ENCODE measurements at regions of chr5 and their contacts with region 1.

Region 1: GRCh38 chr5:172188033-172188892 is at the start of gene STK10:
- DNase-seq: peak; percentile 71 to 93
- H3K4me3 ChIP-seq: peak within 1 kb of the TSS; percentile 67
- H3K27ac ChIP-seq: peak within 1 kb of the TSS; percentile 65
- H3K4me1 ChIP-seq: peaks cover 21% of the 10 kb centered on the region
- H3K27me3 ChIP-seq: no peaks in the 10 kb centered on the region
- CTCF ChIP-seq: peak; percentile 81
- total RNA-seq, gene STK10: 23.3 and 31.5 TPM in 2 replicates

Region 2: GRCh38 chr5:172006321-172007174 is 181.7 kb before region 1 on chr5 and contains the start of gene FBXW11:
- CTCF ChIA-PET with region 1: interaction called, 7 read pairs
- POLR2A ChIA-PET with region 1: interaction called, 7 read pairs
- intact Hi-C with region 1: loop called (anchors 2 kb)
- DNase-seq: peak; percentile 95 to 96
- H3K4me3 ChIP-seq: peak within 1 kb of the TSS; percentile 86
- H3K27ac ChIP-seq: peak within 1 kb of the TSS; percentile 68
- H3K4me1 ChIP-seq: peaks cover 29% of the 10 kb centered on the region
- H3K27me3 ChIP-seq: no peaks in the 10 kb centered on the region
- CTCF ChIP-seq: no peak
- total RNA-seq, gene FBXW11: 54.8 and 58.7 TPM in 2 replicates

Region 3: GRCh38 chr5:172052450-172053236 is 135.6 kb before region 1 on chr5:
- CTCF ChIA-PET with region 1: no interaction called
- POLR2A ChIA-PET with region 1: interaction called, 3 read pairs
- intact Hi-C with region 1: loop called (anchors 5 kb)
- DNase-seq: no peak
- H3K4me3 ChIP-seq: no peak overlapping the region
- H3K27ac ChIP-seq: no peak overlapping the region
- H3K4me1 ChIP-seq: no peaks in the 10 kb centered on the region
- H3K27me3 ChIP-seq: no peaks in the 10 kb centered on the region
- CTCF ChIP-seq: no peak

Region 4: GRCh38 chr5:172086194-172087019 is 101.9 kb before region 1 on chr5:
- CTCF ChIA-PET with region 1: interaction called, 13 read pairs
- POLR2A ChIA-PET with region 1: no interaction called
- intact Hi-C with region 1: no loop called
- DNase-seq: no peak
- H3K4me3 ChIP-seq: no peak overlapping the region
- H3K27ac ChIP-seq: no peak overlapping the region
- H3K4me1 ChIP-seq: no peaks in the 10 kb centered on the region
- H3K27me3 ChIP-seq: no peaks in the 10 kb centered on the region
- CTCF ChIP-seq: no peak

Region 5: GRCh38 chr5:172106511-172107356 is 81.5 kb before region 1 on chr5:
- CTCF ChIA-PET with region 1: interaction called, 6 read pairs
- POLR2A ChIA-PET with region 1: interaction called, 6 read pairs
- intact Hi-C with region 1: loop called (anchors 1 kb)
- DNase-seq: peak in 1 of 2 experiments; percentile 61
- H3K4me3 ChIP-seq: peak overlapping the region; percentile 29; the same call in 1 of the 2 replicates
- H3K27ac ChIP-seq: peak overlapping the region; percentile 25; the same call in 1 of the 2 replicates
- H3K4me1 ChIP-seq: peaks cover 27% of the 10 kb centered on the region
- H3K27me3 ChIP-seq: no peaks in the 10 kb centered on the region
- CTCF ChIP-seq: peak; percentile 99

Region 6: DNA sequence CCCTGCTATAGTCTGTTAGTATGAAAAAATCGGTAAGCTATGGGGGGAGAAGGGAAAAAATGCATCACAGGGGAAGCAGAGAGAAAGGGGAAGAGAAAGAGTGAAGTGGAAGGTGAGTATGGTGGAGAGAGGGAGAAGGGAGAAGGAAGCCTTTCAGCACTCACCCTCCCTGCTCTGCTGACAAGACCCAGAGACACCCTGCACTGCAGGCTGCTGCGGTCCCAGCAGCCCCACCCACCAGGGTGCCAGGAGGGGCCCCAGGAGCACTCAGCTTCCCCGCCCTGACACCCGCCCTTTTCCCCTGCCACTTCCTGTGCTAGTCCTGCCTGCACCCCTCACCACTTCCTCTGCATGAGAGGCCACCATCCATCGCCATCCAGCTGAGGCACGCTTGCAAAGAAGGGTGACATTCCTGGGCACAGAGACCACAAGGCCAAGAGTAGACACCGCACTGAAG is 13.0 kb before region 1 on chr5:
- CTCF ChIA-PET with region 1: interaction called, 10 read pairs
- POLR2A ChIA-PET with region 1: interaction called, 22 read pairs
- intact Hi-C with region 1: loop called (anchors 1 kb)
- DNase-seq: no peak
- H3K4me3 ChIP-seq: no peak overlapping the region
- H3K27ac ChIP-seq: no peak overlapping the region
- H3K4me1 ChIP-seq: no peaks in the 10 kb centered on the region
- H3K27me3 ChIP-seq: no peaks in the 10 kb centered on the region
- CTCF ChIP-seq: no peak

Region 7: DNA sequence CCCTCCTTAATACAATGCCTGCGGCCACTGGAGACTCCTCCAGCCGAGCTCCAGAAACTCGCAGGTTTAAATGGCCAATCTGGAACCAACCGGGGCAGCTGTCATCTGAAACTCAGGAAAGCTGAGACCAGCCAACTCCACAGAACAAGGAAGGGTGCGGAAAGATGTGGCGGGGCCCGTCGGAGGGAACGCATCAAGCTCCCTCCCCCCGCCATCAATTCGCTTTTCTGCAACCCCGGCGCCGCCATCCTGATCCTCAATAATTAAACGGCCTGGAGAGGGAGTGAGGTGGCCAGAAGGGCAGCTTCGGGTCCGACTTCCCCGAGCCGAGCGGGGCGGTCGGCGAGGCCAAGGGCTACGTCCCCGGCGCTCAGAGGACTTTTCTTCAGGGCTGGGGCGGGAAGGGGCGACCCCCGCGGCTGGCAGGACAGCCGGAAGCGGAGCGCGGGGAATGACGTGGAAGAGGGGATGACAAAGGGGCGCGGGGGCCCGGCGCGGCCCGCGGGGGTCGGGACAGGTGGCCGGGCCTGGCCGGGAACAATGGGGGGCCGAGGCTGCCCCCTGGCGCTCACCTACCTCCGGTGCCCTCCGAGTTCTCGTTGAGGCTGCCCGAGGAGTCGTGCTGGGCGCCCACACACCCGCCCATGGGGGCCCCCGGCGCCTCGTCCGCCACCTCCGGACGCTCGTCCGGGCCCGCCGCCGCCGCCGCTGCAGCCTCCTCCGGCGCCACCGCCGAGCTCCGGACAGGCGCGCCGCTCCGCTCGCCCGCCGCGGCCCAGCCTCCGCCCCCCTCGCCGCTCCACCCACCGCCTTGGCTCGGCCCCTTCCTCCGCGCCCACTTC is 95.0 kb after region 1 on chr5 and contains the start of gene UBTD2:
- CTCF ChIA-PET with region 1: interaction called, 3 read pairs
- POLR2A ChIA-PET with region 1: interaction called, 4 read pairs
- intact Hi-C with region 1: loop called (anchors 2 kb)
- DNase-seq: peak; percentile 59 to 91
- H3K4me3 ChIP-seq: peak within 1 kb of the TSS; percentile 98
- H3K27ac ChIP-seq: peak within 1 kb of the TSS; percentile 46
- H3K4me1 ChIP-seq: peaks cover 25% of the 10 kb centered on the region
- H3K27me3 ChIP-seq: no peaks in the 10 kb centered on the region
- CTCF ChIP-seq: peak; percentile 62
- total RNA-seq, gene UBTD2: 16.4 and 21.7 TPM in 2 replicates

Measured in PC-9 (cell line).